ENCODE measurements at regions of chr10 and their contacts with region 1.

Region 1: DNA sequence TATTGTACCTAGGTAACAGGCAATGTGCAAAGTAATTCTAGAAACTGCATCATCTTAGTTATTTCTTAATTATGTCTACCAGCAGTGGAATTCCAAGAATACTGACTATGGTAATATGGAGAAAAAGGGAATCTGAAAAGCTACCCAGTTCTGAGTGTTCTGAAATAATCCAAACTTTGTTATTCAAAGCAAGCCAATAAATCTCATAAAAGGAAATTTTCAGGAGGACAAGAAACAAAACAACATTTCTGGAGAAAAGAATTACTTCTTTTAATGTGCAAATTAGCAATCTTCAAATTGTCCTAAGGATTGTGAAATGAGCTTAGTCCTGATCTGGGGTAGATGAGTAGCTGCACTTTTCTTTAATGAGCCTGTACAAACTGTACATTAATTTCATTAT is 88.8 kb downstream of the MYO3A start:
- DNase-seq: no peak
- ATAC-seq: no peak
- H3K4me3 ChIP-seq: no peak overlapping the region
- H3K27ac ChIP-seq: no peak overlapping the region
- H3K4me1 ChIP-seq: no peaks in the 10 kb centered on the region
- H3K27me3 ChIP-seq: peaks cover 12% of the 10 kb centered on the region; the same call in 1 of the 2 replicates
- CTCF ChIP-seq: no peak
- POLR2A ChIP-seq: no peak
- RAD21 ChIP-seq: no peak

Region 2: GRCh38 chr10:25261558-25261957 is 761.3 kb before region 1 on chr10:
- CTCF ChIA-PET with region 1: no interaction called
- POLR2A ChIA-PET with region 1: no interaction called
- RAD21 ChIA-PET with region 1: no interaction called
- intact Hi-C with region 1: no loop called
- DNase-seq: no peak
- ATAC-seq: no peak
- H3K4me3 ChIP-seq: no peak overlapping the region
- H3K27ac ChIP-seq: no peak overlapping the region
- H3K4me1 ChIP-seq: no peaks in the 10 kb centered on the region
- H3K27me3 ChIP-seq: no peaks in the 10 kb centered on the region
- CTCF ChIP-seq: no peak
- POLR2A ChIP-seq: no peak
- RAD21 ChIP-seq: no peak

Region 3: GRCh38 chr10:25306386-25306785 is 716.4 kb before region 1 on chr10:
- CTCF ChIA-PET with region 1: no interaction called
- POLR2A ChIA-PET with region 1: no interaction called
- RAD21 ChIA-PET with region 1: no interaction called
- intact Hi-C with region 1: loop called (anchors 5 kb)
- DNase-seq: no peak
- ATAC-seq: no peak
- H3K4me3 ChIP-seq: no peak overlapping the region
- H3K27ac ChIP-seq: no peak overlapping the region
- H3K4me1 ChIP-seq: no peaks in the 10 kb centered on the region
- H3K27me3 ChIP-seq: no peaks in the 10 kb centered on the region
- CTCF ChIP-seq: no peak
- POLR2A ChIP-seq: no peak
- RAD21 ChIP-seq: no peak